AG04449 (cell line): ENCODE measurements at regions of chr7 and their contacts with region 1.

Region 1: GRCh38 chr7:117127585-117128168 is 174.4 kb downstream of the ST7 start:
- DNase-seq: no peak
- H3K4me3 ChIP-seq: no peak overlapping the region
- CTCF ChIP-seq: peak; percentile 52

Region 2: GRCh38 chr7:116802746-116803152 is 324.9 kb before region 1 on chr7:
- CTCF ChIA-PET with region 1: no interaction called
- POLR2A ChIA-PET with region 1: no interaction called
- DNase-seq: no peak
- H3K4me3 ChIP-seq: no peak overlapping the region
- CTCF ChIP-seq: no peak

Region 3: GRCh38 chr7:116984917-116985316 is 142.8 kb before region 1 on chr7:
- CTCF ChIA-PET with region 1: interaction called, 519 read pairs
- POLR2A ChIA-PET with region 1: no interaction called
- DNase-seq: no peak
- H3K4me3 ChIP-seq: no peak overlapping the region
- CTCF ChIP-seq: peak; percentile 32

Region 4: DNA sequence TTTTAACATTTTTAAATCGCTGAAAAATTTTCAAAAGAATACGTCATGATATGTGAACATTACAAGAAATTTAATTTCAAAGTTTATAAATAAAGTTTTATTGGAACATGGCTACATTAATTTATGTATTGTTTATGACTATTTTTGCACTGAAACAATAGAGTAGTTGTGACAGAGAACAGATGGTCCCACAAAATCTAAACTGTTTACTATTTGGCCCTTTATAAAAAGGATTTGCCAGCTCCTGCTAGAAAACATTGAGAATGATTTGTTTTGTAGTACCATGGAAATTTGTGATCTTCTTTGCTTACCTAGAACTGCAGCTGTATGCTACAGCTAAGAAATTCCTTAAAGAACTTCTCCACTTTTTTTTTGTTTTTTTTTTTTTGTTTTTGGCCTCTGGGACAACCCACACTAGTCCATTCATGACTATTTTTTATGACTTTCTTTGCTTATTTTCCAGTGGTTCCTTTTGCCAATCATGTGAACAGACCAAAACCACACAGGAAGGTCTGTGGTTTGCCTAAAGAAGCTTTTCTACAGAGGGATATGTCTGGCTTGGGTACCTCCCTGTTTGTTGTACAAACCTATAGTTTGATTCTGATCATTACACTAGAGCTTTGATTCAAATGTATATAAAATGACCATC is 118.7 kb before region 1 on chr7:
- CTCF ChIA-PET with region 1: interaction called, 13 read pairs
- POLR2A ChIA-PET with region 1: no interaction called
- DNase-seq: no peak
- H3K4me3 ChIP-seq: no peak overlapping the region
- CTCF ChIP-seq: no peak

Region 5: GRCh38 chr7:117110480-117111337 is 17.0 kb before region 1 on chr7:
- CTCF ChIA-PET with region 1: interaction called, 62 read pairs
- POLR2A ChIA-PET with region 1: no interaction called
- DNase-seq: no peak
- H3K4me3 ChIP-seq: no peak overlapping the region
- CTCF ChIP-seq: no peak